CD8-positive, alpha-beta T cell (primary cell): ENCODE measurements at regions of chr6 and their contacts with region 1.

Region 1: GRCh38 chr6:40845553-40845952 is 193.5 kb downstream of the UNC5CL start:
- DNase-seq: peak in 3 of 9 experiments; percentile 7 to 42 (median 38)
- ATAC-seq: no peak
- H3K4me3 ChIP-seq: no peak overlapping the region
- H3K4me3 Mint-ChIP-seq: no peak overlapping the region
- H3K27ac ChIP-seq: no peak overlapping the region
- H3K27ac Mint-ChIP-seq: no peak overlapping the region
- H3K4me1 ChIP-seq: no peaks in the 10 kb centered on the region
- H3K4me1 Mint-ChIP-seq: no peaks in the 10 kb centered on the region
- H3K27me3 ChIP-seq: no peaks in the 10 kb centered on the region
- H3K27me3 Mint-ChIP-seq: peaks cover 14% of the 10 kb centered on the region
- CTCF ChIP-seq: peak; percentile 35

Region 2: GRCh38 chr6:39865011-39865888 is 980.3 kb before region 1 on chr6:
- CTCF ChIA-PET with region 1: interaction called, 10 read pairs
- POLR2A ChIA-PET with region 1: no interaction called
- intact Hi-C with region 1: loop called in 1 of 2 experiments (anchors 10 kb)
- DNase-seq: peak in 8 of 9 experiments; percentile 32 to 68 (median 52)
- ATAC-seq: no peak
- H3K4me3 ChIP-seq: no peak overlapping the region
- H3K4me3 Mint-ChIP-seq: no peak overlapping the region
- H3K27ac ChIP-seq: no peak overlapping the region
- H3K27ac Mint-ChIP-seq: no peak overlapping the region
- H3K4me1 ChIP-seq: no peaks in the 10 kb centered on the region
- H3K4me1 Mint-ChIP-seq: no peaks in the 10 kb centered on the region
- H3K27me3 ChIP-seq: no peaks in the 10 kb centered on the region
- H3K27me3 Mint-ChIP-seq: peaks cover 15% of the 10 kb centered on the region
- CTCF ChIP-seq: peak; percentile 74

Region 3: DNA sequence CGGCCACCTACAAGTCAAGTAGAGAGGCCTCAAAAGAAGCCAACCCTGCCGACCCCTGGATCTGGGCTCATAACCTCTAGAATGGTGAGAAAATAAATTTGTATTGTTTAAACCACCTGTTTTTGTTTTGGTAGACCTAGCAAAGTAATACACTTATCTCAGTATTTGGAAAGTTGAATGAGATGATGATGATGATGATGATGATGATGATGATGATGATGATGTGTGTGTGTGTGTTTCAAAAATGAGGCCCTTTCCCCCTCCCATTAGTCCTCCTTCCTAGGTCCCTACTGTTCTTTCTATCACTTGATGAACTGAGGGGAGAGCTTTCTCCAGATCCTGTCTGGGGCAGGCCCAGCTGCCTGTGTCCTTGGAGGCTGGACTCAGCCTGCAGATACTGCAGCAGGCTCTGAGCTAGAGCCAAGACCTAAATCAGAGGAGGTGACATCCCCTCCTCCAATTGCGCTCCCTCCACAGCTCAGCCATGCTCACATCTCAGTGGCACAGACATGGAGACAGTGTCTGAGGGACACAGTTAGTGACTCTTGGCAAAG is 378.5 kb before region 1 on chr6:
- CTCF ChIA-PET with region 1: no interaction called
- POLR2A ChIA-PET with region 1: no interaction called
- intact Hi-C with region 1: no loop called
- DNase-seq: no peak
- ATAC-seq: no peak
- H3K4me3 ChIP-seq: no peak overlapping the region
- H3K4me3 Mint-ChIP-seq: no peak overlapping the region
- H3K27ac ChIP-seq: no peak overlapping the region
- H3K27ac Mint-ChIP-seq: no peak overlapping the region
- H3K4me1 ChIP-seq: no peaks in the 10 kb centered on the region
- H3K4me1 Mint-ChIP-seq: no peaks in the 10 kb centered on the region
- H3K27me3 ChIP-seq: no peaks in the 10 kb centered on the region
- H3K27me3 Mint-ChIP-seq: peaks cover 2% of the 10 kb centered on the region
- CTCF ChIP-seq: no peak

Region 4: GRCh38 chr6:40965046-40965445 is 119.5 kb after region 1 on chr6:
- CTCF ChIA-PET with region 1: no interaction called
- POLR2A ChIA-PET with region 1: no interaction called
- intact Hi-C with region 1: no loop called
- DNase-seq: no peak
- ATAC-seq: no peak
- H3K4me3 ChIP-seq: no peak overlapping the region
- H3K4me3 Mint-ChIP-seq: no peak overlapping the region
- H3K27ac ChIP-seq: no peak overlapping the region
- H3K27ac Mint-ChIP-seq: no peak overlapping the region
- H3K4me1 ChIP-seq: no peaks in the 10 kb centered on the region
- H3K4me1 Mint-ChIP-seq: peaks cover 2% of the 10 kb centered on the region
- H3K27me3 ChIP-seq: no peaks in the 10 kb centered on the region
- H3K27me3 Mint-ChIP-seq: no peaks in the 10 kb centered on the region
- CTCF ChIP-seq: no peak